ENCODE measurements at regions of chr3 and their contacts with region 1.

Region 1: DNA sequence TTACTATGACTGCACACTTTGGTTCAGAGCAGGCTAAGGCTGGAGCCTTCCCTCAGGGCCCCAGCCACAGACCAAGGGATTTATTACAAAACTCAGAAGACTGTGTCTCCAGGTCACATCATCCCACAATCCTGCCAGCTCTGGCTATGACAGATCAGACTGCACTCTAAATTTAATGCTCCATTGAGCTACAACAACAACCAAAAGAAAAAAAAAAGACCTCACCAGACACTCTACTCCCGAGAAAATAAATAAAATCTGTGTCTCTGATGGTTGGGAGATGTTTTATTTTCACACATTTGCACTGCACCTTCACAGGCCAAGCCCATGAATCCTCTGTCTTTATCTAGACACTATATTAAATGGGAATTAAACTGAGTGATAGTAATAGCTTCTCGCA is 50.8 kb upstream of the CTNNB1 start:
- DNase-seq: no peak
- H3K4me3 Mint-ChIP-seq: no peak overlapping the region
- H3K27ac Mint-ChIP-seq: no peak overlapping the region
- H3K4me1 Mint-ChIP-seq: no peaks in the 10 kb centered on the region
- H3K27me3 Mint-ChIP-seq: no peaks in the 10 kb centered on the region
- CTCF ChIP-seq: no peak

Region 2: DNA sequence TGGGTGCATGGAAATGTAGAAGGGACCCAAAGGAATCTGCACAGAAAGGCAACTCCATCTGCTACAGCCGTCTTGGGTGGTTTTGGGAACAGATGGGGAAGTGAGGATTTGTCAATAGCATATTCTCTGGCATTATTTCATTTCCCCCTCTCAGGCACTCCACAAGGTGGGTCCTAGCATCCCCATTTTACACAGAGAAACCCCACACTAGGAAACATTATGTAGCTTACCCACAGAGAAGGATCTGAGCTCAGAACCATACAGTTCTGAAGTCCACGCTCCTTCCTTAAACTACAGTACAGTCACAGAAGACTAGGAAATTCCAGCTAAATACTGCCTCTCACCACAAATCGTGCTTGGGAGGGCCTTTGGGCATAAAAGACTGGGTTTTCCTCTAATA is 10.3 kb before region 1 on chr3:
- CTCF ChIA-PET with region 1: interaction called, 11 read pairs
- POLR2A ChIA-PET with region 1: no interaction called
- intact Hi-C with region 1: no loop called
- DNase-seq: no peak
- H3K4me3 Mint-ChIP-seq: no peak overlapping the region
- H3K27ac Mint-ChIP-seq: no peak overlapping the region
- H3K4me1 Mint-ChIP-seq: peaks cover 7% of the 10 kb centered on the region
- H3K27me3 Mint-ChIP-seq: no peaks in the 10 kb centered on the region
- CTCF ChIP-seq: no peak